ENCODE measurements at regions of chr17 and their contacts with region 1.

Region 1: DNA sequence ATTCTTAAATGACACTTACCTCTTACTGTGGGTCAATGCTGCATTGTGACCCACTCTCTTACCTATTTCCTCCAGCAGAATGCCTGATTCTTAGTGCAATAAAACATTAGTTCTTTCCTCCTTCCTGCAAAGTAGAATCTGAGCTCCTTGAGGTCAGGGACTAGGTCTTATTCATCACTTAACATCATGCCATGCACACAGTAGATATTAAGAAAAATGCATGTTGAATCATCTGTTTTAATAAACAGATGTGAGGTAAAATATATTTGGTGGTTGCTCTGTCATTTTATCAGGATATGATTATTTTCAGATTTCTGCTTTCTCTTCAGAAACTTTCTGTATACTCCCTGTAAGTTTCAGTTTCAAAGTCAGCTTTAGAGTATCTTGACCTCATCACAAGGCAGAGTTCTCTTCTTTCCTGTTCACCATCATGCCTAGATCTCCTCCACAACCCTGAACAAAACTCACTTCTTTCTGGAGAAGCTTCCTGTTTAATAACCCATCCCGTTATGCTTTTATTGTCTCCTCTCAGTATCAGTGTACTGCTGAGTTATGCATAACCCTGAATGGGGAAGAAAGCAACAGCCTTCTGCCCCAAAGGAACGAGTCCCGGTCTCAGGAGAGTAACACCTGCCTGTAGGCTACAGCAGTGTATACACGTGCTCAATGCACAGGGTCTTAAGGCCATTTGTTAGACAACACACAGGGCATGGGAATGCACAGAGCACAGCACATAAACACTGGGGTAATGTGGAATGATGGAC is 30.3 kb upstream of the SUPT4H1 start:
- DNase-seq: peak; percentile 22
- H3K4me3 Mint-ChIP-seq: peak overlapping the region; percentile 9
- H3K27ac Mint-ChIP-seq: peak overlapping the region; percentile 66
- H3K4me1 Mint-ChIP-seq: peaks cover 71% of the 10 kb centered on the region
- H3K27me3 Mint-ChIP-seq: no peaks in the 10 kb centered on the region

Region 2: GRCh38 chr17:58352014-58352842 is 30.1 kb before region 1 on chr17 and contains the start of gene SUPT4H1:
- intact Hi-C with region 1: loop called (anchors 2 kb)
- DNase-seq: peak; percentile 90
- H3K4me3 Mint-ChIP-seq: peak within 1 kb of the TSS; percentile 100
- H3K27ac Mint-ChIP-seq: peak within 1 kb of the TSS; percentile 98
- H3K4me1 Mint-ChIP-seq: peaks cover 49% of the 10 kb centered on the region
- H3K27me3 Mint-ChIP-seq: no peaks in the 10 kb centered on the region
- total RNA-seq, gene SUPT4H1: 153 and 160 TPM in 2 replicates

Region 3: GRCh38 chr17:58369214-58370031 is 12.9 kb before region 1 on chr17:
- intact Hi-C with region 1: no loop called
- DNase-seq: no peak
- H3K4me3 Mint-ChIP-seq: no peak overlapping the region
- H3K27ac Mint-ChIP-seq: no peak overlapping the region
- H3K4me1 Mint-ChIP-seq: peaks cover 4% of the 10 kb centered on the region
- H3K27me3 Mint-ChIP-seq: no peaks in the 10 kb centered on the region